ENCODE measurements at regions of chr12 and their contacts with region 1.

Region 1: GRCh38 chr12:25436203-25437030 is 116.7 kb downstream of the LMNTD1 start:
- DNase-seq: peak in 1 of 2 donors; percentile 77
- ATAC-seq: peak; percentile 71 to 88 (median 78)
- H3K4me3 ChIP-seq: no peak overlapping the region
- H3K4me3 Mint-ChIP-seq: peak overlapping the region; percentile 36
- H3K27ac ChIP-seq: no peak overlapping the region
- H3K27ac Mint-ChIP-seq: no peak overlapping the region
- H3K4me1 ChIP-seq: peaks cover 4% of the 10 kb centered on the region
- H3K4me1 Mint-ChIP-seq: peaks cover 4% of the 10 kb centered on the region in 2 donors
- H3K27me3 ChIP-seq: no peaks in the 10 kb centered on the region
- H3K27me3 Mint-ChIP-seq: no peaks in the 10 kb centered on the region
- CTCF ChIP-seq: peak; percentile 96

Region 2: GRCh38 chr12:25546318-25546717 is 109.9 kb after region 1 on chr12:
- intact Hi-C with region 1: no loop called
- DNase-seq: no peak
- ATAC-seq: no peak
- H3K4me3 ChIP-seq: no peak overlapping the region
- H3K4me3 Mint-ChIP-seq: no peak overlapping the region
- H3K27ac ChIP-seq: no peak overlapping the region
- H3K27ac Mint-ChIP-seq: no peak overlapping the region
- H3K4me1 ChIP-seq: no peaks in the 10 kb centered on the region
- H3K4me1 Mint-ChIP-seq: no peaks in the 10 kb centered on the region
- H3K27me3 ChIP-seq: no peaks in the 10 kb centered on the region
- H3K27me3 Mint-ChIP-seq: peaks cover 4 to 27% of the 10 kb centered on the region in 2 donors
- CTCF ChIP-seq: no peak

Region 3: GRCh38 chr12:25557830-25558436 is 121.5 kb after region 1 on chr12:
- intact Hi-C with region 1: loop called (anchors 1 kb)
- DNase-seq: peak in 1 of 2 donors; percentile 16
- ATAC-seq: peak in 1 of 3 donors; percentile 29
- H3K4me3 ChIP-seq: no peak overlapping the region
- H3K4me3 Mint-ChIP-seq: no peak overlapping the region
- H3K27ac ChIP-seq: no peak overlapping the region
- H3K27ac Mint-ChIP-seq: peak overlapping the region in 1 of 2 donors; percentile 41
- H3K4me1 ChIP-seq: no peaks in the 10 kb centered on the region
- H3K4me1 Mint-ChIP-seq: peaks cover 8 to 10% of the 10 kb centered on the region in 2 donors
- H3K27me3 ChIP-seq: no peaks in the 10 kb centered on the region
- H3K27me3 Mint-ChIP-seq: no peaks in the 10 kb centered on the region
- CTCF ChIP-seq: peak; percentile 66

Region 4: GRCh38 chr12:26028953-26029735 is 592.7 kb after region 1 on chr12:
- intact Hi-C with region 1: loop called (anchors 1 kb)
- DNase-seq: peak in 1 of 2 donors; percentile 54
- ATAC-seq: peak in 1 of 3 donors; percentile 36
- H3K4me3 ChIP-seq: no peak overlapping the region
- H3K4me3 Mint-ChIP-seq: no peak overlapping the region
- H3K27ac ChIP-seq: no peak overlapping the region
- H3K27ac Mint-ChIP-seq: no peak overlapping the region
- H3K4me1 ChIP-seq: no peaks in the 10 kb centered on the region
- H3K4me1 Mint-ChIP-seq: no peaks in the 10 kb centered on the region
- H3K27me3 ChIP-seq: no peaks in the 10 kb centered on the region
- H3K27me3 Mint-ChIP-seq: peaks cover 0 to 7% of the 10 kb centered on the region in 2 donors
- CTCF ChIP-seq: peak; percentile 52

Measured in natural killer cell (primary cell).